Panc1 (cell line): ENCODE measurements at regions of chr10 and their contacts with region 1.

Region 1: GRCh38 chr10:124886195-124886594 is 55.7 kb upstream of the ZRANB1 start:
- DNase-seq: no peak
- ATAC-seq: no peak
- H3K4me3 ChIP-seq: no peak overlapping the region
- H3K27ac ChIP-seq: no peak overlapping the region
- H3K4me1 ChIP-seq: no peaks in the 10 kb centered on the region
- H3K27me3 ChIP-seq: no peaks in the 10 kb centered on the region
- CTCF ChIP-seq: no peak

Region 2: GRCh38 chr10:124791378-124792348 is 94.5 kb before region 1 on chr10 and contains the start of gene EEF1AKMT2:
- CTCF ChIA-PET with region 1: interaction called, 12 read pairs
- POLR2A ChIA-PET with region 1: no interaction called
- in situ Hi-C with region 1: no loop called
- intact Hi-C with region 1: no loop called
- DNase-seq: peak; percentile 47
- ATAC-seq: peak; percentile 99
- H3K4me3 ChIP-seq: peak within 1 kb of the TSS; percentile 80 to 100
- H3K27ac ChIP-seq: peak within 1 kb of the TSS; percentile 94
- H3K4me1 ChIP-seq: peaks cover 7% of the 10 kb centered on the region; the same call in 1 of the 2 replicates
- H3K27me3 ChIP-seq: no peaks in the 10 kb centered on the region
- CTCF ChIP-seq: no peak; the same call in 1 of the 2 replicates
- total RNA-seq, gene EEF1AKMT2: 39.2 TPM

Region 3: GRCh38 chr10:125091891-125092290 is 205.7 kb after region 1 on chr10:
- CTCF ChIA-PET with region 1: interaction called, 7 read pairs
- POLR2A ChIA-PET with region 1: interaction called, 11 read pairs
- in situ Hi-C with region 1: no loop called
- intact Hi-C with region 1: no loop called
- DNase-seq: no peak
- ATAC-seq: no peak
- H3K4me3 ChIP-seq: no peak overlapping the region
- H3K27ac ChIP-seq: no peak overlapping the region
- H3K4me1 ChIP-seq: peaks cover 5% of the 10 kb centered on the region
- H3K27me3 ChIP-seq: no peaks in the 10 kb centered on the region
- CTCF ChIP-seq: no peak